Right ventricle myocardium inferior (tissue), 1 donor: ENCODE measurements at regions of chr10 and their contacts with region 1.

Region 1: DNA sequence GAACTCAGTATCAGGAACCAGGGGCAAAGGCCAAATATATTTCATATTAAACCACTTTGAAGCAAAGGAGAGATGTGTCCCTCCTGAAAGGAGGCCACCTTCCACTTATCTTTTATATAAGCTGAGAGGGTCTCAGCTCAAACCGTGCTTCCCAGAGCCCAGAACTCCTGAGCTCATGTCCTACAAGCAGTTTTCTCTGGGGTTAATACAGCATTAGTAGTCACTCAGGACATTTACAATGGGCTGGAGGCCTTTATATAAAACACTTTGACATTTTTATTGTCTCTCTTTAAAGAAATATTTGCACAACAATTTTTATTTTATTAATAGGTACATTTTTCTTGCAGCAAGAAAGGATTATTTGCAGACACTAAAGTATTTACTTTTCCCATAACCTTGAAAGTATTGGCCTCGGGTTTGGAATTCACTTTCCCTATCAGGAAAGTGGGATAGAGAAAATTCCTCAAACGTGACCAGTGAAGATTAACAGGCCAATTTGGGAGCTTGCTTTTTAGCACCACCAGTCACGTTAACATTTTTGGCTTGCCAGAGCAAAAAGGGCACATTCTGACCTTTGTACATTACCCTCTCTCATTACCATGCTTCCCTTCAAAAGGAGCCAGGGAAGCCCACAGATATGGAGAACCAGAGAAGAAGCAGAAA is 464.9 kb upstream of the NRP1 start:
- DNase-seq: no peak
- ATAC-seq: peak; percentile 50

Region 2: GRCh38 chr10:33335801-33336581 is 463.4 kb before region 1 on chr10:
- intact Hi-C with region 1: loop called (anchors 1 kb)
- DNase-seq: peak; percentile 85
- ATAC-seq: peak; percentile 66

Region 3: GRCh38 chr10:33722067-33722466 is 77.3 kb before region 1 on chr10:
- intact Hi-C with region 1: loop called (anchors 5 kb)
- DNase-seq: no peak
- ATAC-seq: no peak